Activated CD4-positive, alpha-beta T cell treated with anti-CD3 and anti-CD28 coated beads for 36 hours (primary cell): ENCODE measurements at regions of chr5 and their contacts with region 1.

Region 1: DNA sequence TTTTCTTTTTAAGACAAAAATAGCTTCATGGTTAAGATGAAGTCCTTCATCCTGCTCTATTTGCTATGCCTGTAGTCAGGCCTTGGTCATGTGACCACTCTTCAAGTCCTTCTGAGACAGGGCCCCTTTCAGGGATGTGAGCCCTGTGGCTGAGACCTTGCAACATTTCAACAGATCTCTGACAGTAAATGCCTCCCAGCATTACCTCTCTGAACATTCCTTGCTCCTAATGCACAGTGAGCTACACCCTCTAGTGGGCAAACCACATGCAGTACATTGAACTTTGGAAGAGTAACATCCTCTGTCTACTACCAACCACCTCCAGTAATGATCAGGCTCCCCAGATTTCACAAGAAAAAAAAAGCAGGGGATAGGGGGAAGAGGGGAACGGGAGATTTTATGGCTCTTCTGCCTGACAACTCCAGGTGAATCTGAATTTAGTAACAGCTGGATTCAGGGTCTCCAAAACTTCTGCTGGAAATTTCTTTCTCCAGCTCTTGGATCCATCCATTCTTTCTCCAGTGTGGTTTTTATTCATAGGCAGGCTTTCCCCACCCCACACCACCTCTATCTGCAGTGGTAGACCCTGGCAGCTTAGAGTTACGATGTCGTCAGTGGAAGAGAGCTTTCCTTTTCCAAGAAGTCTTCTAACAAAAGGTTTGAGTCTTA is 8.9 kb upstream of the FBXO38 start:
- DNase-seq: peak; percentile 34
- ATAC-seq: peak; percentile 85
- H3K4me3 Mint-ChIP-seq: no peak overlapping the region
- H3K27ac Mint-ChIP-seq: no peak overlapping the region
- H3K4me1 Mint-ChIP-seq: peaks cover 5% of the 10 kb centered on the region
- H3K27me3 Mint-ChIP-seq: peaks cover 2% of the 10 kb centered on the region

Region 2: DNA sequence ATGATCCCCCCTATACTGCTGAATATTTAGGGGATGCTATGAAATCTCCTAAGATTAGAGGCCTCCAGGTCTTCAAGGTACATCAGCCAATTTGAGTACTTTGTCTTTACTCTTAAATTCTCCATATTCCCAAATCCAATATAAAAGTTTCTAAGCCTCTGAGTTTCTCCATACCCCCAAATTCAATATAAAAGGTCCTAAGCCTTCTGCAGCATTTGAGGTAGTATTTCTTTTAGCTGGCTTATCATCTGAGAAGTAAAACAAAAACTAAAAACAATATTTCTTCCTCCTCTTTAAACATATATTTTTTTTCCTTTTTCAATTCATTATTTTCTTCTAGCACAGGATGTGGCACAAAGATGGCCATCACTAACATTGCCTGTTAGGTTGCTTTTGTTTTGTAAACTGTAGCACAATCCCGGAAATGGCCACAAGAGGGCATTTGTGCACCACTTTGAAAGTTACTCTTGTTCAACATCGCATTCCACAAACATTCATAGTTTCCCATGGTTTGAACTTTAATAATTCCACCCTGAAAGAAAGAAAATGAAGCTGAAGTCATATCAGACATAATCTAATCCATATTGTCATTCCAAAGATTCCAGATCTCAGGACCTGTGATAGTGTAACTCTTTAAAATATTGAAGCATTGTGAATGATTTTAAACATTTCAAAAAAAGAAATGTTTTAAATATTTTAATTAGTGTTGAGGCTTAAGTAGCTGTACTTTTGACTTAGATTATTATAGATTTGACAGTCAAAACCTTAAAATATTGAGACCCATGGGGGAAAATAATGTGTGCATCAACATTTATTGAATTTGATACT is 517.3 kb before region 1 on chr5:
- CTCF ChIA-PET with region 1: no interaction called
- POLR2A ChIA-PET with region 1: no interaction called
- intact Hi-C with region 1: loop called in 1 of 2 experiments (anchors 10 kb)
- DNase-seq: peak; percentile 68
- ATAC-seq: peak; percentile 71
- H3K4me3 Mint-ChIP-seq: no peak overlapping the region
- H3K27ac Mint-ChIP-seq: no peak overlapping the region
- H3K4me1 Mint-ChIP-seq: no peaks in the 10 kb centered on the region
- H3K27me3 Mint-ChIP-seq: peaks cover 9% of the 10 kb centered on the region

Region 3: GRCh38 chr5:147956064-147956841 is 418.6 kb before region 1 on chr5:
- CTCF ChIA-PET with region 1: no interaction called
- POLR2A ChIA-PET with region 1: no interaction called
- intact Hi-C with region 1: loop called in 1 of 2 experiments (anchors 5 kb)
- DNase-seq: no peak
- ATAC-seq: no peak
- H3K4me3 Mint-ChIP-seq: no peak overlapping the region
- H3K27ac Mint-ChIP-seq: no peak overlapping the region
- H3K4me1 Mint-ChIP-seq: no peaks in the 10 kb centered on the region
- H3K27me3 Mint-ChIP-seq: peaks cover 2% of the 10 kb centered on the region

Region 4: GRCh38 chr5:148179234-148179824 is 195.5 kb before region 1 on chr5:
- CTCF ChIA-PET with region 1: interaction called, 10 read pairs
- POLR2A ChIA-PET with region 1: no interaction called
- intact Hi-C with region 1: loop called (anchors 1 to 2 kb)
- DNase-seq: no peak
- ATAC-seq: peak; percentile 53
- H3K4me3 Mint-ChIP-seq: no peak overlapping the region
- H3K27ac Mint-ChIP-seq: no peak overlapping the region
- H3K4me1 Mint-ChIP-seq: no peaks in the 10 kb centered on the region
- H3K27me3 Mint-ChIP-seq: peaks cover 17% of the 10 kb centered on the region

Region 5: DNA sequence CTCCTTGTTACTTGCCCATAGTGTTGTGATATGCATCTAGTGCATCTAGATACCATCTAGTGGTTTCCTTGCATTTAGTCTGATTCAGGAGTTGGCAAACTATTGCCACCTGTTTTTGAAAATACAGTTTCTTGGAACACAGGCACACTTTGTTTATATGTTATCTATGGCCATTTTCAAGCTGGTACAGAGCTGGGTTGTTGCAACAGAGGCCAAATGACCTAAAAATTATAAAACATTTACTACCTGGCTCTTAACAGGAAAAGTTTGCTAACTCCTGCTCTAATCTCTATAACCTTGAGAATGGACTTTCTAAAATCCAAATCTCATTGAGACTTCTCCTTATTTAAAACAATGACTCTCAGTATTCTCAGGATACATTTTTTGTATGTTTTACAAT is 10.5 kb before region 1 on chr5:
- CTCF ChIA-PET with region 1: interaction called, 14 read pairs
- POLR2A ChIA-PET with region 1: no interaction called
- intact Hi-C with region 1: no loop called
- DNase-seq: no peak
- ATAC-seq: no peak
- H3K4me3 Mint-ChIP-seq: no peak overlapping the region
- H3K27ac Mint-ChIP-seq: no peak overlapping the region
- H3K4me1 Mint-ChIP-seq: no peaks in the 10 kb centered on the region
- H3K27me3 Mint-ChIP-seq: peaks cover 2% of the 10 kb centered on the region